CD8-positive, alpha-beta T cell (primary cell): ENCODE measurements at regions of chr17 and their contacts with region 1.

Region 1: DNA sequence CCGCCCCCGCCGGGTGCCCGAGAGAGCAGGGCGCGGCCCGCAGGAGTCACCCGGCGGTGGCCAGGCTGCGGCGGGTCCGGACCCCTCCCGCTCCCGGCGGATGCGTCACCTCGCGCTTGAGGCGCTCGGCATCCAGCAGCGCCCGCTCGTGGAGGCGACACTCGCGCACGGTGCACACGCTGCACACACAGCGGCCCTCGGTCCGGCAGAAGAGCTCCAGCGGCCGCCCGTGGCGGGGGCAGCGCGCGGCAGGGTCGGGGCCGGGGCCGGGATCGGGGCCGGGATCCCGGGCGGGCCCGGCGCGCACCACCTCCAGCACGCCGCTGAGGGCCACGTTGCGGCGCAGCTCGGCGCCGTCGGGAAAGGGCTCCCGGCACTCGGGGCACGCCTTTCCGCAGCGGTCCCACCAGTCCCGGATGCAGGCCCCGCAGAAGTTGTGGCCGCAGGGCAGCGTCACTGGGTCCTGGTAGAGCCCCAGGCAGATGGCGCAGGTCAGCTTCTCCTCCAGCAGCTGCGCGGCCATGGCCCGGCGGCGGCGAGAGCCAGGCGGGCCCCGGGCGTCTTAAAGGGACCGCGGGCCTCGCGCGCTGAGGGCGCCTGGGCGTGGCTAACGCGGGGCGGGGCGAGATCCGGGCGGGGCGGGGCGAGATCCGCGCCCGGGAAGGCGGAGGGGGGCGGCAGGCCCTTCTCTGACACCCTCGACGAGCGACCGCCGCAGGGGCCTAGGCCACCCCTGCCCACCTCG is at the start of gene TRIM65:
- DNase-seq: peak; percentile 51 to 88 (median 78)
- ATAC-seq: peak; percentile 86
- H3K4me3 ChIP-seq: peak within 1 kb of the TSS; percentile 61 to 73
- H3K4me3 Mint-ChIP-seq: peak within 1 kb of the TSS; percentile 79
- H3K27ac ChIP-seq: peak within 1 kb of the TSS; percentile 47 to 66
- H3K27ac Mint-ChIP-seq: peak within 1 kb of the TSS; percentile 80
- H3K4me1 ChIP-seq: peaks cover 20% of the 10 kb centered on the region
- H3K4me1 Mint-ChIP-seq: peaks cover 27% of the 10 kb centered on the region
- H3K27me3 ChIP-seq: no peaks in the 10 kb centered on the region
- H3K27me3 Mint-ChIP-seq: no peaks in the 10 kb centered on the region
- CTCF ChIP-seq: peak; percentile 39
- total RNA-seq, gene TRIM65: 13.6 to 15.1 TPM

Region 2: DNA sequence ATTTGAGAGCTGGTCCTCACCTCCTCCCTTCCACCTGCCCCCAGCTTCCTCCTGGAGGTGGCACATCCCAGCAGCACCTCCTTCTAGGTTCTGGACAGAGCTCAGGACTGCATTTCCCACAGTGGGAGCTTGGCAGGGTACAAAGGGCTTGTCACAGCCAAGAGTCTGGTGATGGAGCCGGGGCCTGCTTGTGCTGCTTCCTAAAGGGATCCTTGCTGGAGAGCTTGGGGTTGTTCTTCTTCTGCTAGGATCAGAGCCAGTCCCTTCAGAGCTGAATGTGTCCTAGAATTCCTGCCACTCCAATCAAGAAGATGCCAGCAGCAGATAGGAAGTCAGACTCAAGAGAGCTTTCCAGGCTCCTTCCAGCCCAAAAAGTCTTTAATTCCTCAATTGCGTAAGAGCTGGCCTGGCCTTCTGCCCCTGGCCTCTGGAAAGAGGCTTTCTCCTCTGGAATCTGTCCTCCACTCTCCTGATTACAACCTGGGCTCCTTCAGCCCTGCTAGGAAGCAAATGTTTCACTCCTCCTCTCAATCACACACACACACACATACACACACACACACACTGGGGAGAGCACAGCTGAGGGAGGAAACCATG is 1277.4 kb before region 1 on chr17:
- CTCF ChIA-PET with region 1: no interaction called
- POLR2A ChIA-PET with region 1: no interaction called
- intact Hi-C with region 1: no loop called
- DNase-seq: no peak
- ATAC-seq: no peak
- H3K4me3 ChIP-seq: no peak overlapping the region
- H3K4me3 Mint-ChIP-seq: no peak overlapping the region
- H3K27ac ChIP-seq: no peak overlapping the region
- H3K27ac Mint-ChIP-seq: no peak overlapping the region
- H3K4me1 ChIP-seq: no peaks in the 10 kb centered on the region
- H3K4me1 Mint-ChIP-seq: no peaks in the 10 kb centered on the region
- H3K27me3 ChIP-seq: peaks cover 0 to 9% of the 10 kb centered on the region in 2 experiments
- H3K27me3 Mint-ChIP-seq: peaks cover 60% of the 10 kb centered on the region
- CTCF ChIP-seq: no peak

Region 3: GRCh38 chr17:75764711-75765421 is 131.7 kb before region 1 on chr17 and contains the start of gene GALK1:
- CTCF ChIA-PET with region 1: interaction called, 3 read pairs
- POLR2A ChIA-PET with region 1: interaction called, 3 read pairs
- intact Hi-C with region 1: loop called in 1 of 2 experiments (anchors 5 kb)
- DNase-seq: peak; percentile 46 to 89 (median 70)
- ATAC-seq: peak; percentile 94
- H3K4me3 ChIP-seq: peak within 1 kb of the TSS; percentile 62 to 86
- H3K4me3 Mint-ChIP-seq: peak within 1 kb of the TSS; percentile 74
- H3K27ac ChIP-seq: peak within 1 kb of the TSS; percentile 51 to 63
- H3K27ac Mint-ChIP-seq: peak within 1 kb of the TSS; percentile 55
- H3K4me1 ChIP-seq: peaks cover 16% of the 10 kb centered on the region
- H3K4me1 Mint-ChIP-seq: peaks cover 8% of the 10 kb centered on the region
- H3K27me3 ChIP-seq: no peaks in the 10 kb centered on the region
- H3K27me3 Mint-ChIP-seq: no peaks in the 10 kb centered on the region
- CTCF ChIP-seq: peak; percentile 40
- total RNA-seq, gene GALK1: 3.4 to 3.7 TPM

Region 4: DNA sequence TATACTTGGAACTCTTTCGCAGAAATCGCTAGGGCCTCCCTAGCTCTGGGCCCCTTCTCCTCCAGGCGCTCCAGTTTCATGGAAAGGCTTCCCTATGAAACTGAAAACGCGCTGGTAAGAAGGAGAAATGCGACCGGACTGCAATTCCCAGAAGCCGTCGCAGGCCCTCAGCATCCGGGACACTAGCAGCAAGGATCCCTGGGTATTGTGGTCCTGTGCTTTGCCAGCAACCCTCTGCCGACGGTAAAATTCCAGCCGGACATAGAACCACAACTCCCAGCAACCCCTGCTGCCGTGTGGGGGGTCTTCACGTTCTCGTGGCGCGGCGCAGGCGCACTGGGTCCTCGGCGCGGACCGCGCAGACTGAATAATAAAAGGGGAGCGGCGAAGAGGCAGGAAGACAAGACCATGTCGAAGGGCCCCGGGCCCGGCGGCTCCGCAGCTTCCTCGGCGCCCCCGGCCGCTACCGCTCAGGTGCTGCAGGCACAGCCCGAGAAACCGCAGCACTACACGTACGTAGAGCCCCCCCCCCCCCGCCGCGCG is 112.0 kb before region 1 on chr17 and contains the start of gene UNK:
- CTCF ChIA-PET with region 1: interaction called, 5 read pairs
- POLR2A ChIA-PET with region 1: interaction called, 9 read pairs
- intact Hi-C with region 1: loop called (anchors 1 to 5 kb)
- DNase-seq: peak; percentile 91 to 99 (median 96)
- ATAC-seq: peak; percentile 64
- H3K4me3 ChIP-seq: peak within 1 kb of the TSS; percentile 57 to 78
- H3K4me3 Mint-ChIP-seq: peak within 1 kb of the TSS; percentile 93
- H3K27ac ChIP-seq: peak within 1 kb of the TSS; percentile 95 to 100
- H3K27ac Mint-ChIP-seq: peak within 1 kb of the TSS; percentile 98
- H3K4me1 ChIP-seq: peaks cover 39% of the 10 kb centered on the region
- H3K4me1 Mint-ChIP-seq: peaks cover 49% of the 10 kb centered on the region
- H3K27me3 ChIP-seq: no peaks in the 10 kb centered on the region
- H3K27me3 Mint-ChIP-seq: no peaks in the 10 kb centered on the region
- CTCF ChIP-seq: no peak
- total RNA-seq, gene UNK: 37.3 to 42.8 TPM

Region 5: DNA sequence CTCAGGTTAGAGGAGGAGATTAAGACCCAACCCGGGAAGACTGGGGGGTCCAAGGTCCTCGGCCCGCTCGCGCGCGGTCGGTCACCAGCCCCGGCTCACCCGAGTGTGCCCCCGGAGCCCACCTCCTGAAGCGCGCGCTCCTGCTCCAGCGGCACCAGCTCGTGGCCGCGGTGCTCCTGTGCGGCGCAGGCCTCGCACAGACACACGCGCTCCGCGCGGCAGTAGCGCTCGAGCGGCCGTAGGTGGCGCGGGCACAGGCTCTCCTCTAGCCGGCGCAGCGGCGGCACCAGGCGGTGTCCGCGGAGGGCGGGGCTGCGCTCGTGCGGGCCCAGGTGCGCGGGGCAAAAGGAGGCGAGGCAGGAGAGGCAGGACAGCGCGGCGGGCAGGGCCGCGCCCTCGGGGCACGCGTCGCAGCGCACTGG is 18.8 kb before region 1 on chr17:
- CTCF ChIA-PET with region 1: interaction called, 82 read pairs
- POLR2A ChIA-PET with region 1: interaction called, 54 read pairs
- intact Hi-C with region 1: loop called (anchors 1 kb)
- DNase-seq: peak; percentile 44 to 85 (median 72)
- ATAC-seq: peak; percentile 67
- H3K4me3 ChIP-seq: peak overlapping the region; percentile 41 to 60
- H3K4me3 Mint-ChIP-seq: peak overlapping the region; percentile 88
- H3K27ac ChIP-seq: peak overlapping the region in 1 of 2 experiments; percentile 0
- H3K27ac Mint-ChIP-seq: peak overlapping the region; percentile 80
- H3K4me1 ChIP-seq: peaks cover 42% of the 10 kb centered on the region
- H3K4me1 Mint-ChIP-seq: peaks cover 46% of the 10 kb centered on the region
- H3K27me3 ChIP-seq: peaks cover 0 to 8% of the 10 kb centered on the region in 2 experiments
- H3K27me3 Mint-ChIP-seq: no peaks in the 10 kb centered on the region
- CTCF ChIP-seq: peak; percentile 69

Region 6: GRCh38 chr17:75927286-75927922 is 30.8 kb after region 1 on chr17:
- CTCF ChIA-PET with region 1: no interaction called
- POLR2A ChIA-PET with region 1: no interaction called
- intact Hi-C with region 1: no loop called
- DNase-seq: peak in 2 of 9 experiments; percentile 31 to 35
- ATAC-seq: no peak
- H3K4me3 ChIP-seq: no peak overlapping the region
- H3K4me3 Mint-ChIP-seq: no peak overlapping the region
- H3K27ac ChIP-seq: no peak overlapping the region
- H3K27ac Mint-ChIP-seq: no peak overlapping the region
- H3K4me1 ChIP-seq: no peaks in the 10 kb centered on the region
- H3K4me1 Mint-ChIP-seq: no peaks in the 10 kb centered on the region
- H3K27me3 ChIP-seq: no peaks in the 10 kb centered on the region
- H3K27me3 Mint-ChIP-seq: no peaks in the 10 kb centered on the region
- CTCF ChIP-seq: no peak